Cardiac septum (tissue), 1 donor: ENCODE measurements at regions of chr3 and their contacts with region 1.

Region 1: DNA sequence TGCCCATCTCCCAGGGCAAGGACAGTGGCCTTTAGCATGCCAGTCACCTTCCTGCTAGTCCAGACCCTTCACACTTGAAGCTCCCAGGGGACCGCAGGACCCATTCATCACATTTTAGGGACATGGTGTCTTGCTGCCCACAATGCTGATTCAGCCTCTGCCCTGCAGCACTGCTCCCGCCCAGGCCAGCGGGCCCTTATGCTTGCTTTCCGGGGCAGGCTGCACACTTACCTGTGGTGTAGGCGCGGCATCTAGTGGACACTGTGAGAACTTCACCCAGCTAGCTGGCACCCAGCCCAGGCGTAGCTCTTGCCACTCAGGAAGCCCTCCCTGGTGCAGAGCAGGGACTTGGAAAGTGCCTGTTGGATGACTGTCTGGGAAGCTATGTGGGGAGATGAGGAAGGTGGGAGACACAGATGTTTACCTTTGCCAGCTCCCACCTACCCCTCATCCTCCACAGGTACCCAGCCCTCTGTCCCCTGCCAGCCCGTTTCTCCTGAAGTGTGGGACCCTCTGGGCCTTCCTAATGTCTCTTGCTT is 26.2 kb upstream of the NR2C2 start:
- DNase-seq: peak; percentile 94

Region 2: GRCh38 chr3:14674841-14675240 is 246.3 kb before region 1 on chr3 and contains the start of gene C3orf20:
- intact Hi-C with region 1: loop called (anchors 1 kb)
- DNase-seq: no peak
- total RNA-seq, gene C3orf20: 0.32 TPM

Region 3: GRCh38 chr3:14791343-14791945 is 129.7 kb before region 1 on chr3:
- intact Hi-C with region 1: loop called (anchors 2 kb)
- DNase-seq: peak; percentile 83

Region 4: DNA sequence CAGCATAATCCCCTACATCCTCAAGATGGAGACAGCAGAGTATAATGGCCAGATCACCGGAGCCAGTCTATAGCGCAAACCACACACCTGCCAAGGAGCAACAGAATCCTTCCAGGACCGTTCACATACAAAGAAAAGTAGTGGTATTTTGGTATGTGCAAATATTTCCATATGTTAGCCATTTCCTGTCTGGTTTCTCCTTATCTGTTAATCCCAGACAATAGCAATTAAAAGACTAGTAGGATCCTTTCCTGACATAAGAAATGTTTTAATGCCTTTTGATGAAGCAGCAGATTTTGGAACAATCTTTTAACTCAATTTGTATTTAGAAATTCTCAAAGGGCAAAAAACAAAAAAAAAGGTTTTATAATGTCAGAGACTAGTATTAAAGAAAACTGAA is 121.8 kb after region 1 on chr3:
- intact Hi-C with region 1: loop called (anchors 5 kb)
- DNase-seq: no peak